A673 (cell line): ENCODE measurements at regions of chr4 and their contacts with region 1.

Region 1: GRCh38 chr4:186887291-186887700 is 163.6 kb upstream of the FAT1 start:
- DNase-seq: peak; percentile 97
- H3K4me3 ChIP-seq: no peak overlapping the region
- H3K27ac ChIP-seq: peak overlapping the region; percentile 65
- H3K4me1 ChIP-seq: peaks cover 31% of the 10 kb centered on the region
- H3K27me3 ChIP-seq: no peaks in the 10 kb centered on the region
- CTCF ChIP-seq: no peak

Region 2: DNA sequence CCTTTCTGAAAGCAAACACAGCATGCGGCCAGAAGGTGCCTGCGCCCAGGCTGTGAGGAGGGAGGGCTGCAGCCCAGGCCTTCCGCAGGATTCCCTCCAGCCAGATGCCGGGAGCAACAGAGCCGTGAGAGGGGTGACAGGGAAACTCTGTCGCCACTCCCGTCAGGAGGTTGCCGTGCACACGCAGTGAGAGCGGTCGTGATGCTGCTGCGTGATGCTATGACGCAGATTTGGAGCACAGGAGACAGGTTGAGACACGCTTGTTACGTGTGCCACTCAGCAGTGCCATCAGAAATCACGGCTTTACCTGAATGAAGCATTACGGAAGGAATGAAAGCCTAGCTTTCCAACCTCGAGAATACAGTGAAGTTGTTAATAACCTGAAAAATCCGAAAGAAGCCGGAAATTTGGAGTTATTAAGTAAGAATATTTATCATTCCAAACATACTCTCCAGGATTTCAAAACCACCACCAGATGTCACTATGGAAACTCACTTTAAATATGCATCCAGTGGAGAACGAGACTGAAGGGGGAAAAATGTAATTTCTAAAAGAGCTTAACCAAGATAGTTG is 218.1 kb before region 1 on chr4:
- CTCF ChIA-PET with region 1: no interaction called
- POLR2A ChIA-PET with region 1: no interaction called
- intact Hi-C with region 1: no loop called
- DNase-seq: peak; percentile 80
- H3K4me3 ChIP-seq: no peak overlapping the region
- H3K27ac ChIP-seq: no peak overlapping the region
- H3K4me1 ChIP-seq: peaks cover 33% of the 10 kb centered on the region
- H3K27me3 ChIP-seq: no peaks in the 10 kb centered on the region
- CTCF ChIP-seq: peak; percentile 69

Region 3: GRCh38 chr4:186755550-186756519 is 131.5 kb before region 1 on chr4:
- CTCF ChIA-PET with region 1: no interaction called
- POLR2A ChIA-PET with region 1: no interaction called
- intact Hi-C with region 1: no loop called
- DNase-seq: no peak
- H3K4me3 ChIP-seq: no peak overlapping the region
- H3K27ac ChIP-seq: no peak overlapping the region
- H3K4me1 ChIP-seq: peaks cover 22% of the 10 kb centered on the region
- H3K27me3 ChIP-seq: no peaks in the 10 kb centered on the region
- CTCF ChIP-seq: no peak

Region 4: DNA sequence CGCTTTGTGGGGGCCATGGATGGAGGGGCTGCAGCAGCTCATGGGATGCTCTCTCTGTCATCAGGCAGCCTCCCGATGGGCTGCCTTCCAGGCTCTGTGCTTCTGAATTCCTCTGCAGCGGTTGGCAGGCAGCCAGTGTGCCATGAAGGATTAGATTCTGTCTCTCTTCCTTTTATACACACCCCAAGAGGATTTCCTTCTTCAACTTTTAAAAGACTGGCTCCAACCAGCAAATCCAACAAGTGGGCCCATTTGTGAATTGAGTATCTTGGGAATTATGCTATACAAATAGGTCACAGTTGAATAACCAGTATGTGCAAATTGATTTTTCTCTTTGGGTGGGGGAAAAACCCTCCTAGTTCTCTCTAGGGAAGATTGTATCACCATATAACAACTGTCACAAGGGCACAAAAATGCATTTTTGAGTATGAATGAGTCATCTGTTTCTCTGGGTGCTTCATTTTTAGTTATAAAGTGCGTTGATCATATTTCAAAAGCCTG is 66.9 kb before region 1 on chr4:
- CTCF ChIA-PET with region 1: no interaction called
- POLR2A ChIA-PET with region 1: no interaction called
- intact Hi-C with region 1: loop called (anchors 1 kb)
- DNase-seq: peak; percentile 98
- H3K4me3 ChIP-seq: no peak overlapping the region
- H3K27ac ChIP-seq: no peak overlapping the region
- H3K4me1 ChIP-seq: peaks cover 35% of the 10 kb centered on the region
- H3K27me3 ChIP-seq: no peaks in the 10 kb centered on the region
- CTCF ChIP-seq: no peak

Region 5: DNA sequence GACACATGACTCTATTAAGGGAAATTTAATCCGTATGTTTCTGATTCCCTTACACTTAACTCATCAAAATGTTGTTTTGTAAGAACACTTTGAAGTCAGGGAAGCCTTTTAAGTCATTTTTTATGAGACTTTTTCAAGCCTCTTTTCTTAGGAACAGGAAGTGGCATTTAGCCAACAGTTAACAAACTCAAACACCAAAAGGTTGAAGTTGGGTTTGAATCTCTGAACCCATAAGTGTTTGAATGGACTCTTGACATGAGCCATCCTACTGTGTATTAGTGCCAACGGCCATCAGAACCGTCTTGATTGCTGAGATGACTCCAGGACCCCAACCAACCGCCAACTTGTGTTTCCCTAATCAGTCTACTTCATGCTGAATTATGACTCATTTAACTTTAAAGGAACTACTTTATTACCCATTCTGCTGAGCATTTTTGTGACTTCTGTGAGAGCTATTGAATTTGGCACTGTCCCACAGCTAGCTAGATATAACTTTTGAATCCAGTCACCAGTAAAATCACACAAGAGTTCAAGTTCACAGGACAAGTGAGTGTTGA is 45.4 kb after region 1 on chr4:
- CTCF ChIA-PET with region 1: no interaction called
- POLR2A ChIA-PET with region 1: no interaction called
- intact Hi-C with region 1: loop called (anchors 5 kb)
- DNase-seq: peak; percentile 86
- H3K4me3 ChIP-seq: no peak overlapping the region
- H3K27ac ChIP-seq: no peak overlapping the region
- H3K4me1 ChIP-seq: peaks cover 21% of the 10 kb centered on the region
- H3K27me3 ChIP-seq: peaks cover 32% of the 10 kb centered on the region
- CTCF ChIP-seq: no peak

Region 6: GRCh38 chr4:187141101-187141500 is 253.8 kb after region 1 on chr4:
- CTCF ChIA-PET with region 1: no interaction called
- POLR2A ChIA-PET with region 1: no interaction called
- intact Hi-C with region 1: no loop called
- DNase-seq: no peak
- H3K4me3 ChIP-seq: no peak overlapping the region
- H3K27ac ChIP-seq: no peak overlapping the region
- H3K4me1 ChIP-seq: no peaks in the 10 kb centered on the region
- H3K27me3 ChIP-seq: peaks cover 82% of the 10 kb centered on the region
- CTCF ChIP-seq: no peak